ENCODE measurements at regions of chr10 and their contacts with region 1.

Region 1: GRCh38 chr10:58177362-58177947 is 90.2 kb downstream of the IPMK start:
- DNase-seq: peak in 1 of 5 donors; percentile 7
- H3K4me3 ChIP-seq: no peak overlapping the region
- H3K4me3 Mint-ChIP-seq: no peak overlapping the region
- H3K27ac ChIP-seq: no peak overlapping the region
- H3K27ac Mint-ChIP-seq: no peak overlapping the region
- H3K4me1 ChIP-seq: no peaks in the 10 kb centered on the region
- H3K4me1 Mint-ChIP-seq: no peaks in the 10 kb centered on the region
- H3K27me3 ChIP-seq: no peaks in the 10 kb centered on the region
- H3K27me3 Mint-ChIP-seq: peaks cover 1 to 3% of the 10 kb centered on the region in 2 donors

Region 2: DNA sequence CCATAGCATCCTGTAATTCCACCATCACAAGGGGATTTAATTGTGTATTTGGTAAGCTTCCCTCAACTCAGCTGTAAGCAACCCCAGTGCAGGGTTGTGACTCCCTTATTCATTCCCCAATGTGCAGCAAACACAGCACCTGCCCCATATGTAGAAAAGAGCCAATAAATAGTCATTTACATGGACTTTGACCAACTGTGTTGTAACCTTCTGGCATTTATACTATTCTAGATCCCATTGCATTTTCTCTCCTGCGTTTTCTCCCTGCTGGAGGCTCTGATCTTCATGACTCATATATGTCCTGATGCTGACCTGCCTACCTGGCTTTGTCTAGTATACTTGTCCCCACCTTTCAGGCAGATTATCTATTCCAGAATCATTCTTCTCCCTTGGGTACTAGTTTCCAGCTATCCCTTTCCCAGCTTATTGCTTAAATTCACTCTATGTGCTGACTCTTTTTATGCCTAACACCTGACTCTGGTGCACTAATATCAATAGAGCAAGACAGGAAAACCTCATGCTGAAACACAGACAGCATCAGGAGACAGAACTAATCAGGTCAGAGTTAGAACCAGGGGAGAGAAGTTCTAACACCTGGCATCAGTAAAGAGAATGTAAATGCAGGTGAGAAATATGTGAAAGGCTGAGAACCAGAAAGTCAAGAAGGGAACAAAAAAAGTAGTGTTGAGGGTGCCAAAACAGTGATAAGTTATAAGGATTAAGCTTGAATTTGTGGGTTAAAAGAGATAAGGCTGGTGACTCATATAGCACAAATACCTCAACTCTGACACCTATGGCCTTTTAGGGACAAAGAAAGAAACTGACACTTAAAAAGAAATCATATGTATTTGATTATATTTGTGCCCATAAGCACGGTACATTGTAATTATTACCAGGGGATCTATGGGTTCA is 312.4 kb before region 1 on chr10:
- CTCF ChIA-PET with region 1: no interaction called
- POLR2A ChIA-PET with region 1: no interaction called
- DNase-seq: no peak
- H3K4me3 ChIP-seq: no peak overlapping the region
- H3K4me3 Mint-ChIP-seq: no peak overlapping the region
- H3K27ac ChIP-seq: no peak overlapping the region
- H3K27ac Mint-ChIP-seq: no peak overlapping the region
- H3K4me1 ChIP-seq: no peaks in the 10 kb centered on the region
- H3K4me1 Mint-ChIP-seq: no peaks in the 10 kb centered on the region
- H3K27me3 ChIP-seq: no peaks in the 10 kb centered on the region
- H3K27me3 Mint-ChIP-seq: no peaks in the 10 kb centered on the region

Region 3: DNA sequence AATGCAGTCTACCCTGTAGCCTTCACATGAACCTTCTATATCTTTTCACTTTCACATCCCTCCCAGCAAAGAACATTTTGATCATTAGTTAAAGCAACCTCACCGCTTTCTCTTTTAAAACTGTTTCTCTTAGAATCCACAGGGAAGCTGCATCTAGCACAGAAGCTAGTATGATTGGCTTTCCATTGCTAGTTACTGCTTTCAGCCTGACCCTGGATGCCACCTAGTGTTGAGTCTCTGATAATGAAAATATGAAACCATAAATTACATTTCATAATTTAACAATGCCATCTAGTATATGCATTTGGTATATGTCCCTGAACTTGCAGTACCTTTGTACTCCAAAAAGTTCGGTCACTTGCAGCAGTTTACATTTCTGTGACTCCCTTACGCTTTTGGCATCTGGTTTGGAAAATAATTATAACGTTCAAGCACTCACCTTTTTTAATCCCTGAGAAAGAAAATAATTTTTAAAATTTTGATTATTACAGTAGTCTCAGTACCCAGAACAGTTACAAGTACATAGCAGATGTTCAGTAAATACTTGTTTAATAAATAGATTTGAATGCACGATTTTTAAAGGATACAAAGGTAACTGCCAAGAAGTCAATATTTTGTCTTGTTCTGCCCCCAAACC is 114.2 kb after region 1 on chr10:
- CTCF ChIA-PET with region 1: interaction called, 39 read pairs
- POLR2A ChIA-PET with region 1: no interaction called
- DNase-seq: peak in 2 of 5 donors; percentile 23 to 41
- H3K4me3 ChIP-seq: no peak overlapping the region
- H3K4me3 Mint-ChIP-seq: no peak overlapping the region
- H3K27ac ChIP-seq: no peak overlapping the region
- H3K27ac Mint-ChIP-seq: no peak overlapping the region
- H3K4me1 ChIP-seq: no peaks in the 10 kb centered on the region
- H3K4me1 Mint-ChIP-seq: no peaks in the 10 kb centered on the region
- H3K27me3 ChIP-seq: no peaks in the 10 kb centered on the region
- H3K27me3 Mint-ChIP-seq: no peaks in the 10 kb centered on the region